Motor neuron (in vitro differentiated cells): ENCODE measurements at regions of chr4 and their contacts with region 1.

Region 1: DNA sequence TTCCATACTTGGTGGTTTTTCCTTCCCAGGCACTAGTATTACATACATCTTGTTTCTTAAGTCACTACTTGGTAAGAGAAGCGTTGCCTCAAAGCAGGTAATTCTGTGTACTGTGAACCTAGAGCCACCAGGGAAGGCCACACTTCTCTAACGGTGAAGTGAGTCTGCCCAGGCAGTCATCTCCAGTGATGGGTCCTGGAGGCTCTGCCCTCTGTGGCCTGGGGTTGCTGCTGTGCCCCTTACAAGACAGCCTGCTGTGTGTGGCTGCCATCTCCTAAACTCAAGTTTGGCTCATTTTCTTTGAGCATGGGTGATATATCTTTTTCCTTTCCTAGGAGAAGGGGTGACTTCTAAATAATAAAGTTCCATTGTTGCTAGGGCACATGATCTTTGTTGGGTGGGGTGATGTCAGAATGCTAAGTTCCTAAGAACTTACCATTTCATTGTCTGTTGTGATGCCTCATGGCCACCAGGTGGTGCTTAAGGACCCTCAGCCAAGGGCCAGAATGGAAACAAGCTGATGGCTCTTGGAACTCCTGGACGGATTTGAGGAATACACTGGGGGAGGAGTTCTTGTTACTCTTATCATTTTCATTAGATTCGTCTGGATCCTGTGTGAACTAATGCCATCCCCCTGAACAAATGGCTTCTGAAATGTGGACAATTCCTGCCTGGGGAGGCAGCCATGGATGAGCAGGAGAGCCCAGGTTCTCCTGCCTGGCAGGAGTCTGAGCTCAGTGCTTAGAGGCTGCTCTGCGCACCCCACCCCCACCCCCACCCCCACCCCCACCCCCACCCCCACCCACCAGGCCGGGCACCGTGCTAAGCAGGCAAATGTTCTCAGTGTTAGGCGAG is 41.1 kb upstream of the WDR1 start:
- ATAC-seq: peak; percentile 65 to 98 (median 75)
- H3K4me3 ChIP-seq: no peak overlapping the region
- H3K27ac ChIP-seq: no peak overlapping the region
- H3K4me1 ChIP-seq: no peaks in the 10 kb centered on the region

Region 2: GRCh38 chr4:10403633-10404445 is 246.1 kb after region 1 on chr4:
- in situ Hi-C with region 1: loop called in 1 of 9 experiments (anchors 25 kb)
- ATAC-seq: peak in 4 of 8 experiments; percentile 42 to 58 (median 46)
- H3K4me3 ChIP-seq: no peak overlapping the region
- H3K27ac ChIP-seq: no peak overlapping the region
- H3K4me1 ChIP-seq: no peaks in the 10 kb centered on the region

Region 3: GRCh38 chr4:10524196-10524833 is 366.6 kb after region 1 on chr4:
- in situ Hi-C with region 1: loop called in 4 of 9 experiments (anchors 25 kb)
- ATAC-seq: no peak
- H3K4me3 ChIP-seq: no peak overlapping the region
- H3K27ac ChIP-seq: no peak overlapping the region
- H3K4me1 ChIP-seq: peaks cover 0 to 2% of the 10 kb centered on the region in 2 donors

Region 4: DNA sequence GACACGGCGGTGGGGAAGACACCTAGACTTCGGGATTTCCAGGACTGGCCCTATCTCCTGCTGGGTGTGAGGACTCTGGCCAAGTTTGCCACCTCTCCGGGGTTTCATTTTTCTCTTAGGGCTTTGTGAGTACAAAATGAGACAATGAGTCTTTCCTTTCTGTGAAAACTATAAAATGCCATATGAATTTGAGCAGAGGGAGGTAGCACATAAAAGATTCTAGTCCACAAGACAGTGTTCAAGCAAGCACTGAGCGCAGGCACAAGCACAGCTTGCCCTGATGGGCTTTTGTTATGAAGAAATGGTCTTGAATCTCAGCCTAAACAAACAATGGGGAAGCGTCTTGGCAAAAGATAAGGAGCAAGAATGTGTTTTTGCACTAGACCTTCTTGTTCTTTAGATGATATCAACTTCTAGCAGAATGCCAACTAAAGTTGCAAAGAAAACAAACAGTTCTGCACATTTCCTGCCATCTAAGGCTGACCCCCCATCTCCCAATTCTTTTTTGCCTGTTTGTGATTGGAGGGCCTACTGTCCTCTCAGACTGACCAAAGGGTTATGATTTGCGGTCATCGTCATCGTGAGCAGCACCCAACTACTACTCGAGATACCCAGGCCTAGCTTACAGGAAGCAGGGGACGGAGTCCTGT is 372.6 kb after region 1 on chr4:
- in situ Hi-C with region 1: loop called in 3 of 9 experiments (anchors 25 kb)
- ATAC-seq: no peak
- H3K4me3 ChIP-seq: no peak overlapping the region
- H3K27ac ChIP-seq: no peak overlapping the region
- H3K4me1 ChIP-seq: no peaks in the 10 kb centered on the region

Region 5: DNA sequence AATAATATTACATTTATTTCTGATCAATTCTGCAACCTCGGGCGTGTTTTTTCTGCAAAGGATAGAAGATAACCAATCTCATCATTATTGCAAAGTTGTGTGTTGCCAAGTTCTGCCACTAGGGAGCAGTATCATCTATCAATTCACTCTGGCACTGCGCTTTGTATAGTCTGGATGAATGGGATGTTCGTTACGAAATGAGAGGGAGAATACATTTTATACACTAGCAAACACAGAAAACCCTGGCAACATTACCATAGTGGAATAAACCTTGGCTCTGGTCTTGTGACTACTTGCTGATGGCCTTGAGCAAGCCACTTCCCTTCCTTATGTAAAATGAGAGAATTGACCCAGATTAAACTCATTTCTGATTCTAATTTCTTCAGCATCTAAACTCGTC is 397.0 kb after region 1 on chr4:
- in situ Hi-C with region 1: loop called in 5 of 9 experiments (anchors 10 to 25 kb)
- ATAC-seq: peak; percentile 84 to 99 (median 96)
- H3K4me3 ChIP-seq: no peak overlapping the region
- H3K27ac ChIP-seq: no peak overlapping the region
- H3K4me1 ChIP-seq: peaks cover 0 to 2% of the 10 kb centered on the region in 2 donors